ENCODE measurements at regions of chr9 and their contacts with region 1.

Region 1: GRCh38 chr9:23526806-23527205 is 299.2 kb downstream of the ELAVL2 start:
- DNase-seq: no peak
- H3K4me3 ChIP-seq: no peak overlapping the region
- H3K27ac ChIP-seq: no peak overlapping the region
- H3K4me1 ChIP-seq: no peaks in the 10 kb centered on the region
- H3K27me3 ChIP-seq: no peaks in the 10 kb centered on the region
- CTCF ChIP-seq: no peak
- POLR2A ChIP-seq: no peak

Region 2: DNA sequence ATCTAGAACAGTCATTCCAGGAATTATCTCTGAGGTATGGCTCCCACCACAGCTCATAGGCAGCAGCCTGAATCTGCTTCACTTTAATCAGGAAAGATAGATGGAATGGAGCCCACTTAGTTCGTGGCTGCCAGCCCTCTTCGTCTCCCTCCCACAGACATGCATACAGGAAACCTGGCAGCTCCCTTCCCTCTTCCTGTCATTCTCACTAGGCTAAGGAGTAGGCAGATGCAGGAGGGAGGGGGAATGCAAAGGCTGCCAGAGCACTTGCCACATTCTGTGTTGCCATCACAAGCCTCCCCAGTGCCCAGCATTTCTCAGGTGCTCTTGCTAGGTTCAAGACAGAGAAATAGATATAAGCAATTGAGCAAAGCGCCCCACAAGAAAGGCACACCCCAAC is 79.6 kb before region 1 on chr9:
- intact Hi-C with region 1: no loop called
- DNase-seq: no peak
- H3K4me3 ChIP-seq: no peak overlapping the region
- H3K27ac ChIP-seq: no peak overlapping the region
- H3K4me1 ChIP-seq: no peaks in the 10 kb centered on the region
- H3K27me3 ChIP-seq: no peaks in the 10 kb centered on the region
- CTCF ChIP-seq: no peak
- POLR2A ChIP-seq: no peak

Region 3: DNA sequence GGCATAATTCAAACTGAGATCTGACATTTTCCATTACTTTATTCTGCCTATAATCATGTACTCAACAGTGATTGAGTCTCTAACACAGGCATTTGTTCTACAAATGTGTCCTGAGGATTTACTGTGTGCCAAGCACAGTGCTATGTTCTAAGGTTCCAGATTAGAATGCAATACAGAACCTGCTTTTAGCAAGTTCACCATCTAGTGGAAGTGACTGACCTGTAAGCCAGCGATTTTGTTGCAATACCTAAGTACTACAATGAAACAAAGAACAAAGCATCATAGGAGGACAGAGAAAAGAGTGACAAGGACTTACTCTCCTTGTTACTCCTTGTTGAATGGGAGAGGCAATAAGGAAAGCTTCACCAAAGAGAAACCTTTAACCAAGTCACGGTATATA is 48.9 kb before region 1 on chr9:
- intact Hi-C with region 1: no loop called
- DNase-seq: no peak
- H3K4me3 ChIP-seq: no peak overlapping the region
- H3K27ac ChIP-seq: no peak overlapping the region
- H3K4me1 ChIP-seq: no peaks in the 10 kb centered on the region
- H3K27me3 ChIP-seq: no peaks in the 10 kb centered on the region
- CTCF ChIP-seq: no peak
- POLR2A ChIP-seq: no peak

Region 4: GRCh38 chr9:23663536-23663935 is 136.7 kb after region 1 on chr9:
- intact Hi-C with region 1: loop called (anchors 10 kb)
- DNase-seq: peak; percentile 81
- H3K4me3 ChIP-seq: no peak overlapping the region
- H3K27ac ChIP-seq: no peak overlapping the region
- H3K4me1 ChIP-seq: no peaks in the 10 kb centered on the region
- H3K27me3 ChIP-seq: no peaks in the 10 kb centered on the region
- CTCF ChIP-seq: no peak
- POLR2A ChIP-seq: no peak

Measured in prostate gland (tissue), 2 donors.